T-cell (primary cell): ENCODE measurements at regions of chr6 and their contacts with region 1.

Region 1: GRCh38 chr6:16222826-16223225 is 15.6 kb upstream of the GMPR start:
- DNase-seq: no peak
- ATAC-seq: no peak
- H3K4me3 ChIP-seq: no peak overlapping the region
- H3K4me3 Mint-ChIP-seq: no peak overlapping the region
- H3K27ac ChIP-seq: no peak overlapping the region
- H3K27ac Mint-ChIP-seq: peak overlapping the region in 1 of 2 donors; percentile 23
- H3K4me1 ChIP-seq: no peaks in the 10 kb centered on the region
- H3K4me1 Mint-ChIP-seq: no peaks in the 10 kb centered on the region
- H3K27me3 ChIP-seq: peaks cover 0 to 9% of the 10 kb centered on the region in 2 experiments
- H3K27me3 Mint-ChIP-seq: peaks cover 13 to 20% of the 10 kb centered on the region in 2 donors

Region 2: DNA sequence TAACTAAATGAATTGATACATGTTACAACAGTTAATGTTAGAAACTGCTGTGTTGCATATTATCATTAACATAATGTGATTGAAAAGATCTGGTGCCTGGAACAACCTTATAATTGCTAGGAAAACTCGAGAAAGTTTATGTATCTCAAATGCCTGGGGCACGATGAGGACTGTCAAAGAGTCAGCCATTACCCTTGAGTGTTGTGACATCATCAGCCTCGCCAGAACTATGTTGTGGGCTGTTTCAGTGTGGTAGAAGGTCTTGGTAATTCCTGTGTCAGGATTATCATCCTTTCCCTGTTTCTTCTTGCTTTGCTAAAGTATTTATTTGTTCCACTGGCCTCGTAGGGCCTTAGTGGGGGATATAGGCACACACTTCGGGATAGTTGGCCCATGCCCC is 745.1 kb before region 1 on chr6:
- CTCF ChIA-PET with region 1: no interaction called
- POLR2A ChIA-PET with region 1: interaction called in 1 of 2 experiments, 10 read pairs
- DNase-seq: no peak
- ATAC-seq: no peak
- H3K4me3 ChIP-seq: no peak overlapping the region
- H3K4me3 Mint-ChIP-seq: no peak overlapping the region
- H3K27ac ChIP-seq: no peak overlapping the region
- H3K27ac Mint-ChIP-seq: no peak overlapping the region
- H3K4me1 ChIP-seq: peaks cover 0 to 11% of the 10 kb centered on the region in 2 experiments
- H3K4me1 Mint-ChIP-seq: peaks cover 44 to 67% (median 44%) of the 10 kb centered on the region in 3 donors
- H3K27me3 ChIP-seq: no peaks in the 10 kb centered on the region
- H3K27me3 Mint-ChIP-seq: no peaks in the 10 kb centered on the region

Region 3: GRCh38 chr6:16168858-16169257 is 54.0 kb before region 1 on chr6:
- CTCF ChIA-PET with region 1: no interaction called
- POLR2A ChIA-PET with region 1: no interaction called
- DNase-seq: peak in 2 of 35 experiments; percentile 11 to 50
- ATAC-seq: peak in 2 of 4 experiments; percentile 32 to 68
- H3K4me3 ChIP-seq: no peak overlapping the region
- H3K4me3 Mint-ChIP-seq: no peak overlapping the region
- H3K27ac ChIP-seq: no peak overlapping the region
- H3K27ac Mint-ChIP-seq: no peak overlapping the region
- H3K4me1 ChIP-seq: peaks cover 5 to 13% of the 10 kb centered on the region in 2 experiments
- H3K4me1 Mint-ChIP-seq: peaks cover 17 to 27% (median 17%) of the 10 kb centered on the region in 3 donors
- H3K27me3 ChIP-seq: no peaks in the 10 kb centered on the region
- H3K27me3 Mint-ChIP-seq: peaks cover 0 to 13% of the 10 kb centered on the region in 2 donors